Mucosa of descending colon (tissue), 3 donors: ENCODE measurements at regions of chr9 and their contacts with region 1.

Region 1: DNA sequence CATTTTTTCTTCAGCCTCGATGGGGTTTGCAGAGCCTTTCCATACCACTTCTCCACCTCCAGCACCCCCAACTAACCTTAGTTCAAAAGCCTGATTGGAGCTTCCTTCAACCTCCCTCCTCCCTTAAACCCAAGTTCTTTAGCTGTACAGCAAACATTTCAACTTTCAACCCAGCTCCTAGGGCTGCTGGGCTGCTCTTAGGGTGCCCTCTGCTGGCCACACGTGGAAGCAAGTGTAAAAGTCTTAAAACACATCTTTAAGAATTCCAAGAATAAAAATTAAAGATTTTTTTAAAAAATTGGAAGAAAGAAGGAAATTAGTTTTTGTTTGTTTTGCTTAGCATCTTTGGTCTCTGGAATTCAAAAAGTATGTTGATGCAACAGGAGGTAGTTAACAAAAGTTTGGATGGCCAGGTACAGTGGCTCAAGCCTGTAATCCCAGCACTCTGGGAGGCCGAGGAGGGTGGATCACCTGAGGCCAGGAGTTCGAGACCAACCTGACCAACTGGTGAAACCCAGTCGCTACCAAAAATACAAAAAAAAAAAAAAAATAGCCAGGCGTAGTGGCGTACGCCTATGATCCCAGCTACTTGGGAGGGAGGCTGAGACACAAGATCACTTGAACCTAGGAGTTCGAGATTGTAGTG is 15.5 kb upstream of the HSD17B3 start:
- DNase-seq: peak in 2 of 3 donors; percentile 51 to 66
- ATAC-seq: peak; percentile 73
- H3K4me3 ChIP-seq: no peak overlapping the region
- H3K4me1 ChIP-seq: no peaks in the 10 kb centered on the region
- CTCF ChIP-seq: peak; percentile 68

Region 2: DNA sequence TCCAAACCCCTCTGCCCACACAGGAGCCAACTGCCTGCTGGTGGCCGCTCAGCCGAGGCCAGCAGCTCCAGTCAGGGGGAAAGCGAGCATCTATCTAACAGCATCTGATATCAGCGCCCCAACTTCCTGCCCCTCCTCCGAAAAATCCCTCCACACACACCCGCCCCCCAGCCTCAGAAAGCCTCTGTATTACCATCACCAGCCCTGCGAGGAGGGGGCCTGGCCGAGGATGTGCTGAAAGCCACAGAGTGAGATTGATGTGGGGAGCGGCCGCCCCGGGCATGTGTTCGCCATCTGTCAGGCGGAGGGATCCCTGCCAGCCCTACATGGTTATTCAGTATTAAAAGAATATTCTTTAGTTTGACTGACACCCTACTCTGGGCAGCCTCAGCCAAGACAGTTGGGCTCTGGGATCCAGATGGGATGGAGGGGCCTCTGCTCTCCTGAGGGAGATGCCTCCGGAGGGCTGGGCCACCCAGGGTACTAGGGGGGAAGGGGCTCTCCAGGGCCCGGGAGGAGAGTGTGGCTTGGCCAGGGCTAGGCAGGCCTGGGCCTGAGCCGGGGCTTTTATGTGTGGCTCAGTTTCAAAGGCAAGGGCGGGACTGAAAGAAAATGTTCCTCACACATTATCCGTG is 113.5 kb before region 1 on chr9:
- intact Hi-C with region 1: no loop called
- DNase-seq: no peak
- ATAC-seq: no peak
- H3K4me3 ChIP-seq: no peak overlapping the region
- H3K4me1 ChIP-seq: no peaks in the 10 kb centered on the region
- CTCF ChIP-seq: no peak

Region 3: GRCh38 chr9:96232539-96233241 is 84.8 kb before region 1 on chr9:
- intact Hi-C with region 1: loop called in 1 of 2 experiments (anchors 10 kb)
- DNase-seq: peak; percentile 39 to 60 (median 50)
- ATAC-seq: peak; percentile 72
- H3K4me3 ChIP-seq: no peak overlapping the region
- H3K4me1 ChIP-seq: no peaks in the 10 kb centered on the region
- CTCF ChIP-seq: peak; percentile 62